ENCODE measurements at regions of chr11 and their contacts with region 1.

Region 1: GRCh38 chr11:43944761-43945311 is 2.4 kb downstream of the C11orf96 start:
- DNase-seq: peak; percentile 86
- H3K4me3 ChIP-seq: peak overlapping the region; percentile 62 to 73 (median 70)
- H3K27ac ChIP-seq: peak overlapping the region; percentile 85 to 91 (median 86)
- H3K4me1 ChIP-seq: peaks cover 0 to 35% (median 25%) of the 10 kb centered on the region in 4 donors
- H3K27me3 ChIP-seq: peaks cover 0 to 63% (median 27%) of the 10 kb centered on the region in 3 donors
- CTCF ChIP-seq: peak in 3 of 4 experiments; percentile 41 to 62 (median 53)
- EP300 ChIP-seq: no peak
- POLR2A ChIP-seq: no peak

Region 2: DNA sequence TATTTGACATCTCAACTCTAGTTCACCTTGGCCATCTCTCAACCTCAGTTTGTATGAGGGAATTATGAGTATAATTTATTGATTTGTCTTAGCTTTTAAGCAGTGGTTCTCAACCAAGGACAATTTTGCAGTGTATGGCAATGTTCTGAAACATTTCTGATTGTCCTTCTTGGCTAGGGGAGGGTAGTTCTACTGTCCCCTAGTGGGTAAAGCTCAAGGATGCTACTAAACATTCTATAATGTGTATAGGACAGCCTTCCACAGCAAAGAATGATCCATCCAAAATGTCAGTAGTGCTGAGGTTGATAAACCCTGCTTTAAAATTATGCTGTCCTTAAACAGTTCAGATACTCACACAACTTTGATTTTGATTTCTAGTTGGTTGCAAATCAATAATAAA is 142.3 kb before region 1 on chr11:
- intact Hi-C with region 1: no loop called
- DNase-seq: no peak
- H3K4me3 ChIP-seq: no peak overlapping the region
- H3K27ac ChIP-seq: no peak overlapping the region
- H3K4me1 ChIP-seq: no peaks in the 10 kb centered on the region
- H3K27me3 ChIP-seq: no peaks in the 10 kb centered on the region
- CTCF ChIP-seq: no peak
- EP300 ChIP-seq: no peak
- POLR2A ChIP-seq: no peak

Region 3: DNA sequence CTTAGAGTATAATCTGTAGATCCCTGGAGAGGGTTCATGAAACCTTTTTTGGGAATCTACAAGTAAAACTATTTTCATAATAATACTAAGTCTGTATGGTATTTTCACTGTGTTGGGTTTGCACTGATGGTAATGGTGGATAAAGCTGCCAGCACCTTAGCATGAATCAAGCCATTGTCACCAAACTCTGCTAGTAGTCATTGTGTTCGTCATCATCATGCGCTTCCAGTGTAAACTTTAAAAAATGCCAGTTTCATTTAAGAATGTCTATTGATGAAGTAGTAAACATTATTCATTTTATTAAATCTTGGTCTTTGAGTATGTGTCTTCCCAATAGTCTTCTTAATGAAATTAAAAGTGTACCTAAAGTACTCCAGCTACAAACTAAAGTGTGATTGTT is 49.2 kb before region 1 on chr11:
- intact Hi-C with region 1: loop called (anchors 1 kb)
- DNase-seq: no peak
- H3K4me3 ChIP-seq: no peak overlapping the region
- H3K27ac ChIP-seq: no peak overlapping the region
- H3K4me1 ChIP-seq: no peaks in the 10 kb centered on the region
- H3K27me3 ChIP-seq: no peaks in the 10 kb centered on the region
- CTCF ChIP-seq: no peak
- EP300 ChIP-seq: no peak
- POLR2A ChIP-seq: no peak

Region 4: DNA sequence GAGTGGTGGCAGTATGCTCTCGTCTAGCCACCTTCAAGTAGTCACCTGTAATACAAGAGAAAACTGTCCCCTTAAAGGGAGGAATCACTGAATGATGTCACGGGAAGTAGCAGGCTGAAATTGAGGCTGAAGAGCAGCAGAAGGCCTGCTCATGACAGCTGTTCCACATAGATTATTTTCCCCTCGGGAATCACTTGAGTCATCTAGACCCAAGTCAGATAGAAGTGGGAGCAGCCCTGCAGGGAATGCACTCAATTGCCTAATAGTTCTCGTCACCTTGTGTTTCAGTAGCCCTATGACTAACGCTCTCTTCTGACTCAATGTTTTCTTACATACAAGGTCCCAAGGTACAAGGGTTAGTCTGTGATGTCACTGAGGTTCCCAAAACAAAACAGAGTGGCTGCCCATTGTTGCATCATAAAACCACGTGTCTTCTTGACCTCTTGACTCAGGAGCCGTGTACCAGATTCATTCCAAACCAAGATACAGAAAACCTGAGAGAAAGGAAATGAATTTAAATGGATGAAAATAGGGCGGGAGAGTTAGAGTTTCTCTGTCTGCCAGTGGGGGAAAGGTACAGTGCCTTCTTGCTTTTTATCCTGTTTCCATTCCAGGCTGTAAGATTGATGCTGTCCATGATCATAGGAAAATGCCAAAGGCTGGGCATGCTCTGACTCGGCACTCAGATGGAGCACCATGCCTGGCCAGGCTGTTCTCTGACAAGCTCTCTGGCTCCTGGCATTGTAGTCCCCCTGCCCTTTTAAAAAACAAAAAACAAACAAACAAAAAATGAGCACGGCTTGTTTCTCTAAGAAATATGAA is 24.0 kb before region 1 on chr11:
- intact Hi-C with region 1: no loop called
- DNase-seq: peak; percentile 91
- H3K4me3 ChIP-seq: no peak overlapping the region
- H3K27ac ChIP-seq: peak overlapping the region; percentile 74 to 86 (median 82)
- H3K4me1 ChIP-seq: peaks cover 0 to 72% (median 49%) of the 10 kb centered on the region in 4 donors
- H3K27me3 ChIP-seq: no peaks in the 10 kb centered on the region
- CTCF ChIP-seq: no peak
- EP300 ChIP-seq: peak; percentile 67 to 91 (median 82)
- POLR2A ChIP-seq: no peak

Region 5: GRCh38 chr11:44130751-44131150 is 185.9 kb after region 1 on chr11:
- intact Hi-C with region 1: no loop called
- DNase-seq: no peak
- H3K4me3 ChIP-seq: no peak overlapping the region
- H3K27ac ChIP-seq: no peak overlapping the region
- H3K4me1 ChIP-seq: no peaks in the 10 kb centered on the region
- H3K27me3 ChIP-seq: no peaks in the 10 kb centered on the region
- CTCF ChIP-seq: no peak
- EP300 ChIP-seq: no peak
- POLR2A ChIP-seq: no peak